Activated naive CD4-positive, alpha-beta T cell treated with anti-CD3 and anti-CD28 coated beads for 36 hours (primary cell): ENCODE measurements at regions of chr4 and their contacts with region 1.

Region 1: GRCh38 chr4:122922877-122923511 is 597 bp upstream of the NUDT6 start:
- DNase-seq: peak; percentile 94
- H3K4me3 Mint-ChIP-seq: peak overlapping the region; percentile 99
- H3K27ac Mint-ChIP-seq: peak overlapping the region; percentile 87
- H3K4me1 Mint-ChIP-seq: peaks cover 11% of the 10 kb centered on the region
- H3K27me3 Mint-ChIP-seq: peaks cover 2% of the 10 kb centered on the region

Region 2: GRCh38 chr4:121535351-121535750 is 1387.6 kb before region 1 on chr4:
- CTCF ChIA-PET with region 1: no interaction called
- intact Hi-C with region 1: no loop called
- DNase-seq: no peak
- H3K4me3 Mint-ChIP-seq: no peak overlapping the region
- H3K27ac Mint-ChIP-seq: no peak overlapping the region
- H3K4me1 Mint-ChIP-seq: no peaks in the 10 kb centered on the region
- H3K27me3 Mint-ChIP-seq: peaks cover 8% of the 10 kb centered on the region

Region 3: DNA sequence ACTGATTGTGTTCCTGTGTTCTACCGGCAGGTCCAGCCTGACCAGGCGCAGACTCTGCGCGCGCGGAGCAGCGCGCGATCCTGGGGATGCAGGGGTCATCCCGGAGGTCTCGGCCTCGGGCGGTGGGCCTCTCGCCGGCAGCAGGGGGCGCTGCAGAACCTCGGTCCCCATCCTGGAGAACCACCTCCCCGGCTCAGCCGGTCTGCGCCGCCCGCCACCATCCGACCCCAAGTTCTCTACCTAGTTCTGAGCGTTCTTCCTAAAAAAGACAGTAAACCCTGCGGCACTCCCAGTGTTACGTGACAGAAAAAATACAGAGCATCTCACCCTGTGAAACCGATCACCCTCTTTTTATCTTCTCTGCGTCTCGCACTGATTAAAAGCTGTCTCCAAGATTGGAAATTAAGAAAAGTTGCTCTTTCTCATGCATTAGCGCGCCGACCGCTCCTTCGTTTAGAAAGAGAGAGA is 972.7 kb before region 1 on chr4:
- CTCF ChIA-PET with region 1: no interaction called
- intact Hi-C with region 1: loop called (anchors 5 kb)
- DNase-seq: peak; percentile 92
- H3K4me3 Mint-ChIP-seq: peak overlapping the region; percentile 86
- H3K27ac Mint-ChIP-seq: no peak overlapping the region
- H3K4me1 Mint-ChIP-seq: peaks cover 5% of the 10 kb centered on the region
- H3K27me3 Mint-ChIP-seq: peaks cover 32% of the 10 kb centered on the region

Region 4: GRCh38 chr4:122309988-122310626 is 612.9 kb before region 1 on chr4:
- CTCF ChIA-PET with region 1: no interaction called
- intact Hi-C with region 1: loop called (anchors 5 kb)
- DNase-seq: no peak
- H3K4me3 Mint-ChIP-seq: no peak overlapping the region
- H3K27ac Mint-ChIP-seq: peak overlapping the region; percentile 57
- H3K4me1 Mint-ChIP-seq: peaks cover 8% of the 10 kb centered on the region
- H3K27me3 Mint-ChIP-seq: no peaks in the 10 kb centered on the region

Region 5: DNA sequence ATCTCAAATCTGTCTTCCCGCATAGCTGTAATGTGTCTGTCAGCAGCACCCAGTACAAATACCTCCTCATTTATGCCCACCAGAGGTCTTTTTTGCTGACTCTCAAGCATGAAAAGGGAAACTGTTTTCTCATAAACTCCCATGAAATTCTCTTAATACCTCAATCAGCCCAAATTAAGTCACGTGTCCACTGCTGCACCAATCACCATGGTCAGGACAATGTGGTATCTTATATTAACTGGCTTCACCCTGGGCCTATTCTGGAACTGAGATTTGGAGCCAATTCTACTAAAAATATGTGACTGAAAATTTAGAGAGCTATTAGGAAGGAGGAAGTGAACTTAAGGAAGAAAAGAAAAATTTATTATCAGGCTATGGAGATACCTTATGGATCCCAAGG is 360.5 kb before region 1 on chr4:
- CTCF ChIA-PET with region 1: no interaction called
- intact Hi-C with region 1: no loop called
- DNase-seq: no peak
- H3K4me3 Mint-ChIP-seq: no peak overlapping the region
- H3K27ac Mint-ChIP-seq: no peak overlapping the region
- H3K4me1 Mint-ChIP-seq: peaks cover 22% of the 10 kb centered on the region
- H3K27me3 Mint-ChIP-seq: no peaks in the 10 kb centered on the region

Region 6: GRCh38 chr4:122584519-122584918 is 338.5 kb before region 1 on chr4:
- CTCF ChIA-PET with region 1: no interaction called
- intact Hi-C with region 1: loop called (anchors 2 kb)
- DNase-seq: peak; percentile 42
- H3K4me3 Mint-ChIP-seq: peak overlapping the region; percentile 50
- H3K27ac Mint-ChIP-seq: peak overlapping the region; percentile 100
- H3K4me1 Mint-ChIP-seq: peaks cover 65% of the 10 kb centered on the region
- H3K27me3 Mint-ChIP-seq: no peaks in the 10 kb centered on the region

Region 7: GRCh38 chr4:122758033-122758432 is 165.0 kb before region 1 on chr4:
- CTCF ChIA-PET with region 1: interaction called, 41 read pairs
- intact Hi-C with region 1: loop called (anchors 1 kb)
- DNase-seq: no peak
- H3K4me3 Mint-ChIP-seq: no peak overlapping the region
- H3K27ac Mint-ChIP-seq: no peak overlapping the region
- H3K4me1 Mint-ChIP-seq: peaks cover 18% of the 10 kb centered on the region
- H3K27me3 Mint-ChIP-seq: peaks cover 10% of the 10 kb centered on the region

Region 8: GRCh38 chr4:122783301-122784215 is 139.4 kb before region 1 on chr4:
- CTCF ChIA-PET with region 1: no interaction called
- intact Hi-C with region 1: loop called (anchors 1 kb)
- DNase-seq: no peak
- H3K4me3 Mint-ChIP-seq: no peak overlapping the region
- H3K27ac Mint-ChIP-seq: no peak overlapping the region
- H3K4me1 Mint-ChIP-seq: peaks cover 19% of the 10 kb centered on the region
- H3K27me3 Mint-ChIP-seq: peaks cover 16% of the 10 kb centered on the region